ENCODE measurements at regions of chr20 and their contacts with region 1.

Region 1: DNA sequence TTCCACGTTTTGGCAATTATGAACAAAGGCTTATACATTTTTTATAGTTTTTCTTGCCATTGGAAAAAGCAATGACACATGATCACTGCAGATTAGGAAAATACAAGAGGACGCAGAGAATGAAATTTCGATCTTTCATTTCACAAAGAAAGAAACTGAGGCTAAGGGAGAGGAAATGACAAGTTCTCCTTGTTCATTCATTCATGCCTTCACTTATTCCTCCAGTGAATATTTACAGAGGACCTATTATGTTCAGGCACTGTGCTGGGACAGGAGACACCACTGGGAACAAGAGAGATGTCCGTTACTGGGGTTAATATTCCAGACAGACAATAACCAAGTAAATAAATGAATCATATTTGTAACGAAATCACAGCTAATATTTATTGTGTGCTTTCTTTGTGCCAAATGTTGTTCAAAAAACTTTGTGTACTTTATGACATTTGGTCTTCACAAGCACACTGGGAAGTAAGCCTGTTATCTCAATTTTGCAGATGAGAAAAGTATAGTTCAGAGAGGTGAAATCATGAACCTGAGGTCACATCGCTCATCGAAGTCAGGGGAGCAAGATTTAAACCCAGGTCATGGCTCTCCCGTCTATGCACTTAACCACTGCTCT is 36.4 kb upstream of the PREX1 start:
- DNase-seq: no peak
- ATAC-seq: no peak
- H3K4me3 ChIP-seq: no peak overlapping the region
- H3K4me3 Mint-ChIP-seq: no peak overlapping the region
- H3K27ac ChIP-seq: no peak overlapping the region
- H3K27ac Mint-ChIP-seq: no peak overlapping the region
- H3K4me1 ChIP-seq: peaks cover 2 to 3% of the 10 kb centered on the region in 2 experiments
- H3K4me1 Mint-ChIP-seq: peaks cover 5 to 16% (median 7%) of the 10 kb centered on the region in 3 donors
- H3K27me3 ChIP-seq: peaks cover 0 to 4% of the 10 kb centered on the region in 2 experiments
- H3K27me3 Mint-ChIP-seq: peaks cover 0 to 3% of the 10 kb centered on the region in 2 donors

Region 2: GRCh38 chr20:48131581-48131980 is 732.6 kb before region 1 on chr20:
- CTCF ChIA-PET with region 1: no interaction called
- POLR2A ChIA-PET with region 1: no interaction called
- DNase-seq: no peak
- ATAC-seq: no peak
- H3K4me3 ChIP-seq: no peak overlapping the region
- H3K4me3 Mint-ChIP-seq: no peak overlapping the region
- H3K27ac ChIP-seq: no peak overlapping the region
- H3K27ac Mint-ChIP-seq: no peak overlapping the region
- H3K4me1 ChIP-seq: no peaks in the 10 kb centered on the region
- H3K4me1 Mint-ChIP-seq: no peaks in the 10 kb centered on the region
- H3K27me3 ChIP-seq: peaks cover 0 to 9% of the 10 kb centered on the region in 2 experiments
- H3K27me3 Mint-ChIP-seq: peaks cover 18 to 19% of the 10 kb centered on the region in 2 donors

Region 3: DNA sequence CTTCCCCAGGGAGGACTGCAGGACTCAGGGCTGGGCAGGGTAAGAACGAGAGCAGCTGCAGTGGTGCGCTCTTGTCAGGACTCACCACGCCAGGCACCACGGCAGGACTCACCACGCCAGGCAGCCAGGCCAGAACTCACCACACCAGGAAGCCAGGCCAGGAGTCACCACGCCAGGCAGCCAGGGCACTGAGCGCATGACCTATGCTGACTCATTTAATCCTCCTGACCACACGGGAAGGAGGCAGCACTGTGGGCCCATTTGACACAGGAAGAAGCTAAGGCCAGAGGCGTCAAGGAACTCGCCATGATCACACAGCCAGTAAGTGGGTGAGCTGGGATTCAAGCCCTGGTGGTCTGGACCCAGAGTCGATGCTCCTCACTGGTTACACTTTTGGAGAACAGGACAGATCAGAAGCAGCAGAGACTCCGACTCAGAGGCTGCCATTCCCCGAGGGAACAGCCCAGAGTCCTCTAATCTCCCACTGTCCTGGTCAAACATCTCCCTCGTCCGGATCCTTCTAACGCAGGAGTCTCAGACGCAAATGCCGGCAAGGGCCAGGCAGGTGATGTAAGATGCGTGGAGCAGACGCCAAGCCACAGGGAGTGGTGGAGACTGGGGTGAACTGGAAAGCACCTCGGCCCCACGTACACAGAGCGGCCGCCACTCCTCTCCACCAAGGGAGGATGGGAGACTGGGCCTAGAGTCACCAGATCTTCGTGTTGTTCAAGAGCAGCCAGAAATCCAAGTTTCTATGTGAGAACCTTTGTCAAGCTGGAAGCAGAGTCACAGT is 225.4 kb before region 1 on chr20:
- CTCF ChIA-PET with region 1: interaction called in 1 of 2 experiments, 16 read pairs
- POLR2A ChIA-PET with region 1: no interaction called
- DNase-seq: no peak
- ATAC-seq: no peak
- H3K4me3 ChIP-seq: no peak overlapping the region
- H3K4me3 Mint-ChIP-seq: no peak overlapping the region
- H3K27ac ChIP-seq: no peak overlapping the region
- H3K27ac Mint-ChIP-seq: no peak overlapping the region
- H3K4me1 ChIP-seq: peaks cover 0 to 2% of the 10 kb centered on the region in 2 experiments
- H3K4me1 Mint-ChIP-seq: no peaks in the 10 kb centered on the region
- H3K27me3 ChIP-seq: no peaks in the 10 kb centered on the region
- H3K27me3 Mint-ChIP-seq: no peaks in the 10 kb centered on the region

Region 4: DNA sequence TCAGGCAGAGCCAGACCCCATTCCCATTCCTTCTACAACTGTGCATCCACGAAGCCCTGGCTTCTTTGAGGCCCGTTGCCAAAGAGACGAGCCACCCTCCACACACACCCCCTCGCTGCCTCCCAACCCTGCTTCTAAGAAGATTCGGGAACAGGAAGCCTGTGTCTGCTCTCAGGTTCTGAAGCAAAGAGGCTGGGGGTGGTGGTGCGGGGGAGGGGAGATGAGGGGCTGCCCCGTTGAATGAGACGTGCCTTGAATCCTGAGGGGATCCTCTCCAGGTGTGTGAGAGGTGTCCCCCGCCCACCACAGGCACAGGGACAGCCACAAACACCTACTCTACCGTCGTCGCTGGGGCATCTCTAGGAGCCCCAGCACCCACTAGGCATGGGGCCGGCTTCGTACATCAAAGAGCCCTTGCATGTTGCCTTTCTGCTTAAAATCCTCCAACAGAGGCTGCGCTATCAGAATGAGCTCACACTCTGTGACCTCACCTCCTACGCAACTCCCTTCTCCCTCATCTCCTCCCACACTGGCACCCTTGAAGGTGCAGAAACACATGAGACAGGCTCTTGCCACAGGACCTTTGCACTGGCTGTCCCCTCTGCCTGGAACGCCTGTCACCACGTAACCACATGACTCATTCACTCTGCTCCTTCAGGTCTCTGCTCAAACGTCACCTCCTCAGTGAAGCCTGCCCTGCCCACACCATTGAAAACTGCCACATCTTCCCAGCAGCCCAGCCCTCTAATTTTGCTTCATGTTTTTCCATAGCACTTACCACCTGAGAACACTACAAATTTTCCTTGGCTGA is 94.9 kb before region 1 on chr20:
- CTCF ChIA-PET with region 1: no interaction called
- POLR2A ChIA-PET with region 1: no interaction called
- DNase-seq: peak; percentile 36 to 94 (median 85)
- ATAC-seq: peak; percentile 68 to 86 (median 70)
- H3K4me3 ChIP-seq: peak overlapping the region in 1 of 2 donors; percentile 10
- H3K4me3 Mint-ChIP-seq: peak overlapping the region; percentile 7 to 57 (median 54)
- H3K27ac ChIP-seq: peak overlapping the region; percentile 80
- H3K27ac Mint-ChIP-seq: peak overlapping the region; percentile 93 to 94
- H3K4me1 ChIP-seq: peaks cover 13 to 94% of the 10 kb centered on the region in 2 experiments
- H3K4me1 Mint-ChIP-seq: peaks cover 78 to 97% (median 89%) of the 10 kb centered on the region in 3 donors
- H3K27me3 ChIP-seq: no peaks in the 10 kb centered on the region
- H3K27me3 Mint-ChIP-seq: no peaks in the 10 kb centered on the region

Region 5: GRCh38 chr20:48851579-48851978 is 12.6 kb before region 1 on chr20:
- CTCF ChIA-PET with region 1: no interaction called
- POLR2A ChIA-PET with region 1: no interaction called
- DNase-seq: no peak
- ATAC-seq: no peak
- H3K4me3 ChIP-seq: no peak overlapping the region
- H3K4me3 Mint-ChIP-seq: no peak overlapping the region
- H3K27ac ChIP-seq: no peak overlapping the region
- H3K27ac Mint-ChIP-seq: no peak overlapping the region
- H3K4me1 ChIP-seq: peaks cover 0 to 5% of the 10 kb centered on the region in 2 experiments
- H3K4me1 Mint-ChIP-seq: peaks cover 0 to 9% (median 1%) of the 10 kb centered on the region in 3 donors
- H3K27me3 ChIP-seq: peaks cover 0 to 4% of the 10 kb centered on the region in 2 experiments
- H3K27me3 Mint-ChIP-seq: peaks cover 0 to 4% of the 10 kb centered on the region in 2 donors